ENCODE measurements at regions of chr10 and their contacts with region 1.

Region 1: DNA sequence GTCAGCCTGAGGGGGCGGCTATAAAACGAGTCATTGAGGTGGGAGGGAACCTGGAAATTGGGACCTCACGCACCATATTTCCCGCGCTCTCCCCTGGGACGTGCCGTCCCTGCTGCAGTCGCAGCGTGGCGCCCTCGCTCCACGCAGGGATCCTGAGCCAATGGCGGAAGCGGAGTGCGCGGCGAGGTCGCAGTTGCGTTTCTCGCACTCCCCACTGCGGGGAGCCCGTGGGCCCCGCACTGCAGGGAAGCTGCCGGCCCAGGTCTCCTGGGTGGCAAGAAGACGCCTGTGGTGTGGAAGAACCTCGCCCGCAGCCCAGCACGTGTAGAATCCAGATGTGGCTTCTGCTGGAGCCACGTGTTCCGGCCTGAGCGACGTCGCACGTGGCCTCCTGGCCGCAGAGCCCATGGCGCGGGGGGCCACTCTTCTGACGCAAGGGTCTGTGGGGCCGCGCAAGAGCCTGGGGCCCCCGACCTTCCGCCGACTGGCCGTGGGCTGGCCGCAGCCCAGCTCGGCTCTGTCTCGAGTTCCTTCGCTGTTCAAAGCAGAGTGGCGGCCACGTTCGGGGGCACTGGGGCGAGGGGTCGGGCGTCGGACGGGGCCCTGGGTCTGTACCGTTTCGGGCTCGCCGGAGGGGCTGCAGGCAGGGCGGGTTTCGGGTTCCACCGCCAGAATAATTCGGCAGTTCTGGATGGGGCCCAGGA is 26.4 kb downstream of the HIF1AN start:
- DNase-seq: peak; percentile 43 to 88 (median 76)

Region 2: GRCh38 chr10:100878291-100878910 is 316.2 kb after region 1 on chr10:
- intact Hi-C with region 1: loop called (anchors 5 kb)
- DNase-seq: peak; percentile 52 to 90 (median 75)